HepG2 (cell line): ENCODE measurements at regions of chr19 and their contacts with region 1.

Region 1: GRCh38 chr19:45994989-45995714 is at the start of gene CCDC61:
- DNase-seq: peak; percentile 99
- ATAC-seq: peak; percentile 97
- H3K4me3 ChIP-seq: peak within 1 kb of the TSS; percentile 69 to 83 (median 82)
- H3K27ac ChIP-seq: peak within 1 kb of the TSS; percentile 43
- H3K4me1 ChIP-seq: peaks cover 12% of the 10 kb centered on the region; the same call in 1 of the 2 replicates
- H3K27me3 ChIP-seq: 0 out of 5 replicates have a peak, but pooled peaks cover 0 to 6% of the 10 kb centered on the region in 2 experiments
- CTCF ChIP-seq: no peak
- EP300 ChIP-seq: no peak
- POLR2A ChIP-seq: peak; percentile 76 to 88
- RAD21 ChIP-seq: no peak
- total RNA-seq, gene CCDC61: 3.3 and 4.2 TPM in 2 replicates

Region 2: DNA sequence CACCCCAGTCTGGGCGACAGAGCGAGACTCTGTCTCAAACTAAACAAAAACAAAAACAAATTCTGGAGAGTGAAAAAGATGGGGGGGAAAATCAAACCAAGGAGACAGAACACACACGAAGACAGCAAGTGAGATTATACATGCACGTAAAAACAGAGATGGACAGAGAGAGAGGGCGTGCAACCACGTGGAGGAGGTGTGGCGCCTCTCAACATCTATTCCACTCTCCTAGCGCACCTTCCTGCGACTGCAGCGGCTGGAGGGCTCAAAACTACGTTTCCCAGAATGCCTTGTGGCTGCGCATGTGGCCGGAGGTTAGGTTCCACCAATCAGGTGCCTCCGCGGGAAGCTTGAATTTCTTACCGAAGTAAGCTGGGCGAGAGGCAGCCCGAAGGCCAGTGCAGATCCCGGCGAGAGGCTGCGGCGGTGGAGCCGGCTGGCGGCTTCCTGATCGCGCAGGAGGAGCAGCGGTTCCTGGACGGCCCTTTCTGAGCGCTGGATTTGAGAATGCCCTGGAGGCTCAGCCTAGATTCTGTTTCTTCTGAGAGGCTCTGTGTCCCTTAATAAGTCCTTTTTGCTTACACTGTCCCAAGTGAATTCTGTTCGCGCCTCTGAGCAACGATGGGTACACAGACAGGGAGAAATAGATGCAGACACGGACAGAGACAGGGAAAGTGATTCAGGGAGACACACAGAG is 67.4 kb before region 1 on chr19:
- CTCF ChIA-PET with region 1: no interaction called
- POLR2A ChIA-PET with region 1: no interaction called
- in situ Hi-C with region 1: no loop called
- intact Hi-C with region 1: loop called (anchors 10 kb)
- DNase-seq: peak; percentile 92
- ATAC-seq: peak; percentile 95
- H3K4me3 ChIP-seq: peak overlapping the region; percentile 17 to 58 (median 49); a peak in 4 of 6 replicates
- H3K27ac ChIP-seq: no peak overlapping the region
- H3K4me1 ChIP-seq: peaks cover 23% of the 10 kb centered on the region
- H3K27me3 ChIP-seq: peaks cover 1 to 12% of the 10 kb centered on the region in 2 experiments; a peak in 4 of 5 replicates
- CTCF ChIP-seq: peak; percentile 43
- EP300 ChIP-seq: no peak
- POLR2A ChIP-seq: peak; percentile 22 to 66; a peak in 2 of 4 replicates
- RAD21 ChIP-seq: no peak

Region 3: GRCh38 chr19:46016426-46017094 is 21.4 kb after region 1 on chr19:
- CTCF ChIA-PET with region 1: no interaction called
- POLR2A ChIA-PET with region 1: interaction called, 11 read pairs
- in situ Hi-C with region 1: no loop called
- intact Hi-C with region 1: no loop called
- DNase-seq: peak; percentile 43
- ATAC-seq: peak; percentile 85
- H3K4me3 ChIP-seq: peak overlapping the region; percentile 28 to 59 (median 42); a peak in 3 of 6 replicates
- H3K27ac ChIP-seq: no peak overlapping the region
- H3K4me1 ChIP-seq: no peaks in the 10 kb centered on the region
- H3K27me3 ChIP-seq: no peaks in the 10 kb centered on the region
- CTCF ChIP-seq: peak; percentile 80
- EP300 ChIP-seq: no peak
- POLR2A ChIP-seq: no peak
- RAD21 ChIP-seq: no peak